B cell (primary cell): ENCODE measurements at regions of chr1 and their contacts with region 1.

Region 1: GRCh38 chr1:167059045-167059808 is 30.9 kb downstream of the GPA33 start:
- DNase-seq: peak; percentile 79
- ATAC-seq: peak; percentile 79
- H3K4me3 ChIP-seq: no peak overlapping the region
- H3K4me3 Mint-ChIP-seq: no peak overlapping the region
- H3K27ac ChIP-seq: no peak overlapping the region
- H3K27ac Mint-ChIP-seq: no peak overlapping the region
- H3K4me1 ChIP-seq: peaks cover 3 to 6% of the 10 kb centered on the region in 2 donors
- H3K4me1 Mint-ChIP-seq: peaks cover 4% of the 10 kb centered on the region
- H3K27me3 ChIP-seq: peaks cover 0 to 10% (median 0%) of the 10 kb centered on the region in 4 experiments
- H3K27me3 Mint-ChIP-seq: peaks cover 3% of the 10 kb centered on the region
- CTCF ChIP-seq: peak; percentile 99

Region 2: DNA sequence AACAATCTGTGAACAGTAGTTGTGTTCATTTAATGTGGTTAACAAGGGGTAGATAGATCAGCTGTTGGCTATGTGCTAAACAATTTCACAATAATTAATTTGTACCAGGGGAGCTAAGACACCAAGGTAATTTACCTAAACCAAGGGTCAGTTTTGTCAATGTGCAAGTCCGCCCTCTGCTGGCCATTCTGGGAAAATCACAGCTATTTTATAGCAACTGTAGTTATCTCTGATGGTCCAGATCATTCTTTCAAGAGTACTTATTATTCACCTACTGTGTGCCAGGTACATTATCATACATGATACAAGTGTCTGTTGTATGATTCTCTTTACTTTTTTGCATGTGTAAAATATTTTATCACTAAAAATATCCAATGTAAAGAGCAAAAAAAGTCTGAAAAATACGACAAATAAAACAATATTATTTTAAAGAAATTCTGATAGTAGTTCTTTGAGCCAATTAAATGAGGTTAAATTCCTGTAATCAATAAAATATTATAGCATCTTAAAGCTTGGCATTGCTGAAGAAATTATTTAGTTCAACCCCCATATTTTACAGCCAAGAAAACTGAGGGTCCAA is 580.1 kb before region 1 on chr1:
- CTCF ChIA-PET with region 1: interaction called, 10 read pairs
- POLR2A ChIA-PET with region 1: no interaction called
- intact Hi-C with region 1: no loop called
- DNase-seq: peak; percentile 59
- ATAC-seq: peak; percentile 36
- H3K4me3 ChIP-seq: no peak overlapping the region
- H3K4me3 Mint-ChIP-seq: no peak overlapping the region
- H3K27ac ChIP-seq: no peak overlapping the region
- H3K27ac Mint-ChIP-seq: no peak overlapping the region
- H3K4me1 ChIP-seq: peaks cover 0 to 4% of the 10 kb centered on the region in 2 donors
- H3K4me1 Mint-ChIP-seq: peaks cover 3% of the 10 kb centered on the region
- H3K27me3 ChIP-seq: no peaks in the 10 kb centered on the region
- H3K27me3 Mint-ChIP-seq: no peaks in the 10 kb centered on the region
- CTCF ChIP-seq: peak; percentile 89

Region 3: DNA sequence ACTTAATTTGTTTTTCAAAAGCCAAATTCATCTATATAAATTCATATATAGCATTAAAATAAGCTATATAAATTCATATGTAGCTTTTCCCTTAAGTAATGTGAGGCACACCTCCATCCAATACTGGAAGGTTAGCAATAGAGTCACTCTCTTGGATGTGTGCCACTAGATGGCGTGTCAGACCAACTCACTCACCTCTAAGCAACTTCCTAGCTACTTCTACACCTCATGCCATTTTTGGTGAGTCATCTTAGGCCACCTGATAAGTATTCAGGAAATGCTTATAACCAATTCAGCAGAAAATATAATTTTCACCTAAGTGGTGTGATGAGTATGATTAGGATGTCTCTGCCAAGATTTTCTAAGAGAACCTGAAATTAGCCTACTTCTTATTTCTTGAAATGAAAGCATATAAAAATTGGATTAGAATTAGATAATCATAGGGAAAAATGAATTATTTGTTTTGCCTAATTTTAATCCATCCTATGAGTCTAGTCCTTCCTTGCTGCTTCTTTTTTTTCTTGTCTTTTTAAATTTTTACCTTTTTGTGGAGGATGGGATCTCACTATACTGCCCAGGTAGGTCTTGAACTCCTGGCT is 148.7 kb before region 1 on chr1:
- CTCF ChIA-PET with region 1: interaction called, 944 read pairs
- POLR2A ChIA-PET with region 1: interaction called, 6 read pairs
- intact Hi-C with region 1: loop called (anchors 1 kb)
- DNase-seq: peak; percentile 87
- ATAC-seq: peak; percentile 97
- H3K4me3 ChIP-seq: no peak overlapping the region
- H3K4me3 Mint-ChIP-seq: no peak overlapping the region
- H3K27ac ChIP-seq: no peak overlapping the region
- H3K27ac Mint-ChIP-seq: no peak overlapping the region
- H3K4me1 ChIP-seq: peaks cover 6 to 8% of the 10 kb centered on the region in 2 donors
- H3K4me1 Mint-ChIP-seq: peaks cover 6% of the 10 kb centered on the region
- H3K27me3 ChIP-seq: no peaks in the 10 kb centered on the region
- H3K27me3 Mint-ChIP-seq: no peaks in the 10 kb centered on the region
- CTCF ChIP-seq: peak; percentile 96

Region 4: GRCh38 chr1:166975361-166976129 is 83.7 kb before region 1 on chr1 and contains the start of gene ILDR2:
- CTCF ChIA-PET with region 1: interaction called, 15 read pairs
- POLR2A ChIA-PET with region 1: no interaction called
- intact Hi-C with region 1: loop called (anchors 5 kb)
- DNase-seq: peak; percentile 68
- ATAC-seq: peak; percentile 87
- H3K4me3 ChIP-seq: peak within 1 kb of the TSS; percentile 21 to 71 (median 61)
- H3K4me3 Mint-ChIP-seq: peak within 1 kb of the TSS; percentile 90
- H3K27ac ChIP-seq: no peak within 1 kb of the TSS
- H3K27ac Mint-ChIP-seq: peak within 1 kb of the TSS; percentile 27
- H3K4me1 ChIP-seq: peaks cover 18 to 20% of the 10 kb centered on the region in 2 donors
- H3K4me1 Mint-ChIP-seq: peaks cover 20% of the 10 kb centered on the region
- H3K27me3 ChIP-seq: peaks cover 0 to 41% (median 32%) of the 10 kb centered on the region in 4 experiments
- H3K27me3 Mint-ChIP-seq: peaks cover 36% of the 10 kb centered on the region
- CTCF ChIP-seq: no peak
- total RNA-seq, gene ILDR2: 0.36 TPM in 1 of 2 replicates, not detected in the other

Region 5: DNA sequence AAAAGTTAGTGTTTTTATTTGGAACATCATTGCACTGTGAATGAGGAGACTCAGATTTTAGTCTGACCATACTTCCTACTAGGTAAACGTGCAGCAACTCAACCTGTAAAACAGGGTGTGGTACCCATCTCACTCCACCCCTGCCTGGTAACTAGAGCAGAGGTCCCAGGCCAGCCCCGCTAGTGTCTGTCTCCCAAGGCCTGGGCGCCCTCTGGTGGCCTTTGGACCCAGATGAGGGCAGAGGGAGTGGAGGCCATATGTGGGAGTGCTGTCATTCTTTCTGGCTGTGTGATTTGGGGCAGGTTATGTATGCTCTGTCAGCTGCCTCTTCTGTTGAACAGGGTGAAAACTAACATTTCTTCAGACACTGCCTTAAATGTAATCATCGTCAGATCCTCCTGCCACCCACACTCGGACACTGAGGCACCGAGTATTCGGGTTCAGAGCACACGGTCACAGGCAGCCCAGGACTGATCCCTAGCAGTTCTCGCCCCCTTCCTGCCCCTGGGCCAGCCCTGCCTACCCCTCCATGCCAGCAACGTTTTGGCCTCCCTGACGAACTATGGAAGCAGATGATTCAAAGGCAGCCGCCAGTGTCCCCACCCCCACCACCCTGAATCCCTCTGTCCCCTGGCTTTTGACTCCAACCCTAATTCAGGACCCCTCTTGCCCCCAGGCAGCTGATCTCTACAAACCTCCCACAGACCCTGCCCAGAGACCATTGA is 383.1 kb after region 1 on chr1:
- CTCF ChIA-PET with region 1: interaction called, 25 read pairs
- POLR2A ChIA-PET with region 1: no interaction called
- intact Hi-C with region 1: no loop called
- DNase-seq: peak; percentile 84
- ATAC-seq: peak; percentile 92
- H3K4me3 ChIP-seq: no peak overlapping the region
- H3K4me3 Mint-ChIP-seq: peak overlapping the region; percentile 37
- H3K27ac ChIP-seq: no peak overlapping the region
- H3K27ac Mint-ChIP-seq: no peak overlapping the region
- H3K4me1 ChIP-seq: peaks cover 25 to 29% of the 10 kb centered on the region in 2 donors
- H3K4me1 Mint-ChIP-seq: peaks cover 35% of the 10 kb centered on the region
- H3K27me3 ChIP-seq: peaks cover 0 to 20% (median 3%) of the 10 kb centered on the region in 4 experiments
- H3K27me3 Mint-ChIP-seq: peaks cover 5% of the 10 kb centered on the region
- CTCF ChIP-seq: peak; percentile 93